GM12878 (cell line): ENCODE measurements at regions of chr1 and their contacts with region 1.

Region 1: DNA sequence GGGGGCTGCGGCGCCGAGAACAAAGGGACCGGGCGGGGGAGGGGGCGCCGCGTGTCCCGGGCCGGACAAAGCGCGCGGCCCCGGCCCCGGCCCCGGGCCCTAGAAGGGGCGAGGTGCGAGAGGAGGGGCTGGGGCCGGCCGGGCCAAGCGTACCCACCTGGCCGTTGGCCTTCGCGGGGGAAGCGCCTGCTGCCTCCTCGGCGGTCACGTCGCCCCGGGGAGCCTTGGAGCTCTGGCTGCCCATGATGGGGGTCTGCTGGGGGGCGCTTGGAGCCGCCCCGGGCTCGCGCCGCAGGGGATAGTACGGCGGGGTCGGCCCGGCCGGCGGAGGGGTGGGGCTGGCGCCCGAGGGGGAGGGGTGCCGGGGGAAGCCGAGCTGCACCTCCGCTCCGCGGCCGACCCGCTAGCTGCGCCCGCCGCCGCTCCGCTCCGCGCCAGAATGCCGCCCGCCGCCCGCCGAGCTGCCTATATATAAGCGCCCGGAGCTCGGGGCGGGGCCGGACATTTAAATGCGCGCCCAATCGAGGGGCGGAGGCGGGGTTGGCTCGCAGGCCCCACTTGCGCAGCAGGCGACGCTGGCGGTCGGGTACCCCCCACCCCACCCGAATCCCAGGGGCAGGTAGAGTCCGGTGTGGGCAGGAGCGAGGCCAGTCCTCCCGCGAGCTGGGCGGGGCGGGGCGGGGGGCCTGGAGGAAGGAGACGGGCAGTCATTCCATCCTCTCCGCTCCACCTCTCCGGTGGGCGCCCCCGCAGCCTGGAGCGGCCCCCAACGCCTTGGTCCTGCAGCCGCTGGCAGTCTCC is at the start of gene MARCKSL1:
- DNase-seq: no peak
- ATAC-seq: peak; percentile 51
- H3K4me3 ChIP-seq: peak within 1 kb of the TSS; percentile 80
- H3K27ac ChIP-seq: peak within 1 kb of the TSS; percentile 81
- H3K4me1 ChIP-seq: peaks cover 57% of the 10 kb centered on the region
- H3K27me3 ChIP-seq: no peaks in the 10 kb centered on the region
- CTCF ChIP-seq: no peak
- EP300 ChIP-seq: no peak
- POLR2A ChIP-seq: peak; percentile 96
- RAD21 ChIP-seq: no peak
- polyA plus RNA-seq, gene MARCKSL1: 14.5 to 32.6 TPM

Region 2: GRCh38 chr1:32186077-32186476 is 149.9 kb before region 1 on chr1:
- CTCF ChIA-PET with region 1: no interaction called
- POLR2A ChIA-PET with region 1: no interaction called
- RAD21 ChIA-PET with region 1: no interaction called
- SMC1A ChIA-PET with region 1: no interaction called
- in situ Hi-C with region 1: no loop called
- intact Hi-C with region 1: no loop called
- DNase-seq: no peak
- ATAC-seq: no peak
- H3K4me3 ChIP-seq: no peak overlapping the region
- H3K27ac ChIP-seq: no peak overlapping the region
- H3K4me1 ChIP-seq: peaks cover 14% of the 10 kb centered on the region
- H3K27me3 ChIP-seq: no peaks in the 10 kb centered on the region
- CTCF ChIP-seq: no peak
- EP300 ChIP-seq: no peak
- POLR2A ChIP-seq: no peak
- RAD21 ChIP-seq: no peak

Region 3: GRCh38 chr1:32240140-32240951 is 95.6 kb before region 1 on chr1:
- CTCF ChIA-PET with region 1: interaction called, 10 read pairs
- POLR2A ChIA-PET with region 1: no interaction called
- RAD21 ChIA-PET with region 1: interaction called, 7 read pairs
- SMC1A ChIA-PET with region 1: interaction called, 6 read pairs
- in situ Hi-C with region 1: no loop called
- intact Hi-C with region 1: no loop called
- DNase-seq: no peak
- ATAC-seq: peak; percentile 81
- H3K4me3 ChIP-seq: peak overlapping the region; percentile 72
- H3K27ac ChIP-seq: peak overlapping the region; percentile 13; the same call in 1 of the 2 replicates
- H3K4me1 ChIP-seq: peaks cover 21% of the 10 kb centered on the region
- H3K27me3 ChIP-seq: no peaks in the 10 kb centered on the region
- CTCF ChIP-seq: peak in 2 of 3 experiments; percentile 27 to 46; a peak in 3 of 6 replicates
- EP300 ChIP-seq: no peak
- POLR2A ChIP-seq: no peak; the same call in 1 of the 2 replicates
- RAD21 ChIP-seq: no peak

Region 4: DNA sequence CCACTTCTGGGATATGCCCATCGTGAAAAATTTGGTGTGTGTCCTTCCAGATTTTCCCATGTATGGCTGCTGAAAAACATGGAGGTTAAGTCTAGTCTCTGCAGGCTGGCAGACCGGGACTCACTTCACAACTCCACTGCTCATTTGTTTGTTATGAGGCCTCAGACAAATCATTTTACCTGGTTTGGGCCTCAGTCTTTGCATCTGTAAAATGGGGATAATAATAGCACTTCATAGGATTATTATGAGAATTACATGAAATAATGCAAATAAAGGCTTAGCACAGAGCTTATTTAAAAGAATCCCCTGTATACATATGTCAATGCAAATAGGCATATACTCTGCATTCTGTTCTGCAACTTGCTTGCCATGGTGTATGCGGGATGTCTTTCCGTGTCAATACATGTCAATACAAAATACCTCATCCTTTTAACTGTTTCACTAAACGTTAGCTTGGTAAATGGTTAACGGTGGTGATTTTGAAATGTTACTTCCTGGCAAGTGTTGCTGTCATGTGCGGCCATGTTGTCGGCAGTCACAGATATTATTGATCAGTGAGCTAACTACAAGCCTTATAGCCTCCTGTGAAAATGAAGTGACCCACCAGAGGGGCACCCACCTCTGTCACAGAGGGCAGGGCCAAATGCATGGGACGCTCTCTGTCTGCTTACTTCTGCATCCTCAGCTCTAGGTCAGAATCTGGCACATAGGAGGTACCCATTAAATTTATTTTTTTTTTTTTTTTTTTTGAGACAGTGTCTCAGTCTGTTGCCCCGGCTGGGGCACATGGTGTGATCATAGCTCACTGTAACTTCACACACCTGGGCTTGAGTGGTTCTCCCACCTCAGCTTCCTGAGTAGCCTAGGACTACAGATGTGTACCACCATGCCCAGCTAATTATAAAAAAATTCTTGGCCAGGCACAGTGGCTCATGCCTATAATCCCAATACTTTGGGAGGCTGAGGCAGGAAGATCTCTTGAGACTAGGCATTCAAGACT is 80.6 kb before region 1 on chr1:
- CTCF ChIA-PET with region 1: interaction called, 5 read pairs
- POLR2A ChIA-PET with region 1: interaction called, 17 read pairs
- RAD21 ChIA-PET with region 1: interaction called, 30 read pairs
- SMC1A ChIA-PET with region 1: no interaction called
- in situ Hi-C with region 1: no loop called
- intact Hi-C with region 1: no loop called
- DNase-seq: no peak
- ATAC-seq: peak; percentile 1; the same call in 2 of the 3 replicates
- H3K4me3 ChIP-seq: peak overlapping the region; percentile 33; the same call in 1 of the 2 replicates
- H3K27ac ChIP-seq: peak overlapping the region; percentile 89
- H3K4me1 ChIP-seq: peaks cover 66% of the 10 kb centered on the region
- H3K27me3 ChIP-seq: no peaks in the 10 kb centered on the region
- CTCF ChIP-seq: no peak
- EP300 ChIP-seq: no peak
- POLR2A ChIP-seq: no peak
- RAD21 ChIP-seq: no peak

Region 5: GRCh38 chr1:32351399-32352238 is 15.6 kb after region 1 on chr1:
- CTCF ChIA-PET with region 1: interaction called, 4 read pairs
- POLR2A ChIA-PET with region 1: interaction called, 46 read pairs
- RAD21 ChIA-PET with region 1: interaction called, 18 read pairs
- SMC1A ChIA-PET with region 1: interaction called, 16 read pairs
- in situ Hi-C with region 1: no loop called
- intact Hi-C with region 1: loop called (anchors 2 kb)
- DNase-seq: peak; percentile 69
- ATAC-seq: peak; percentile 96
- H3K4me3 ChIP-seq: peak overlapping the region; percentile 72
- H3K27ac ChIP-seq: peak overlapping the region; percentile 56
- H3K4me1 ChIP-seq: peaks cover 14% of the 10 kb centered on the region
- H3K27me3 ChIP-seq: no peaks in the 10 kb centered on the region
- CTCF ChIP-seq: no peak
- EP300 ChIP-seq: no peak
- POLR2A ChIP-seq: peak; percentile 86
- RAD21 ChIP-seq: no peak

Region 6: GRCh38 chr1:32372149-32372756 is 36.3 kb after region 1 on chr1:
- CTCF ChIA-PET with region 1: interaction called, 4 read pairs
- POLR2A ChIA-PET with region 1: interaction called, 4 read pairs
- RAD21 ChIA-PET with region 1: interaction called, 4 read pairs
- SMC1A ChIA-PET with region 1: interaction called, 4 read pairs
- in situ Hi-C with region 1: no loop called
- intact Hi-C with region 1: loop called (anchors 2 kb)
- DNase-seq: peak; percentile 61
- ATAC-seq: peak; percentile 88
- H3K4me3 ChIP-seq: no peak overlapping the region
- H3K27ac ChIP-seq: no peak overlapping the region
- H3K4me1 ChIP-seq: peaks cover 10% of the 10 kb centered on the region
- H3K27me3 ChIP-seq: no peaks in the 10 kb centered on the region
- CTCF ChIP-seq: peak; percentile 6 to 46 (median 33); a peak in 3 of 6 replicates
- EP300 ChIP-seq: no peak
- POLR2A ChIP-seq: no peak
- RAD21 ChIP-seq: peak; percentile 63

Region 7: DNA sequence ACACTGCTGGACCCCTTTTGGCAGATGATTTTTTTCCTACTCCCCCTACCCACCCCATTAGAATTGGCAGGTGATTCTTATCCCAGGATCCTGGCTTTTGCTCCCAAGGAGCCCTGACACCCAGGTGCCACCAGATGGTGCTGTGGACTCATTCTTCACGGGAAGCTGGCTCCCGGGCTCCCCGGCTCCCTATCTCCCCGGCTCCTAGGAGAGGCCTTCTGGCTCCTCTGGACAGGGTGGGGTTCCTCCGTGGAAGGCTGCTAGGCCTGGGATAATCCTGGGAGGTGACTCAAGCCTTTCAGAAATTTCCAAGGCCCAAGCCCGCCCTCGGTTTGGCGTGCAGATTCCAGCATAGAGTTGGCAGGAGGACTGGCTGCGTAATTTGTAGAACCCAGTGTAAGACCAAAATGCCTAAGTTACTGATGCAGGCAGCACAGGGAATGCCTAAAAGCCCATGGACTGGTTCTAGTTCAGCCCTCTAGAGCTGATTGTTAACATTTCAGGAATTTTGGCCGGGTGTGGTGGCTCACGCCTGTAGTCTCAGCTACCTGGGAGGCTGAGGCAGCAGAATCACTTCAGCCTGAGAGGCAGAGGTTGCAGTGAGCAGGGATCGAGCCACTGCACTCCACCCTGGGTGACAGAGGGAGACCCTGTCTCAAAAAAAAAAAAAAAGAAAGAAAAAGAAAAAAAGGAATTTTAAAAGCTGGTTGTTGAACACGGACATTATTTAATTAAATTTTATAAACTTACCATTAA is 65.1 kb after region 1 on chr1:
- CTCF ChIA-PET with region 1: interaction called, 20 read pairs
- POLR2A ChIA-PET with region 1: interaction called, 8 read pairs
- RAD21 ChIA-PET with region 1: interaction called, 8 read pairs
- SMC1A ChIA-PET with region 1: interaction called, 10 read pairs
- in situ Hi-C with region 1: no loop called
- intact Hi-C with region 1: no loop called
- DNase-seq: no peak
- ATAC-seq: peak; percentile 95
- H3K4me3 ChIP-seq: no peak overlapping the region
- H3K27ac ChIP-seq: no peak overlapping the region
- H3K4me1 ChIP-seq: no peaks in the 10 kb centered on the region
- H3K27me3 ChIP-seq: no peaks in the 10 kb centered on the region
- CTCF ChIP-seq: peak; percentile 87 to 94 (median 88)
- EP300 ChIP-seq: no peak
- POLR2A ChIP-seq: no peak
- RAD21 ChIP-seq: peak; percentile 81